ENCODE measurements at regions of chr11 and their contacts with region 1.

Region 1: DNA sequence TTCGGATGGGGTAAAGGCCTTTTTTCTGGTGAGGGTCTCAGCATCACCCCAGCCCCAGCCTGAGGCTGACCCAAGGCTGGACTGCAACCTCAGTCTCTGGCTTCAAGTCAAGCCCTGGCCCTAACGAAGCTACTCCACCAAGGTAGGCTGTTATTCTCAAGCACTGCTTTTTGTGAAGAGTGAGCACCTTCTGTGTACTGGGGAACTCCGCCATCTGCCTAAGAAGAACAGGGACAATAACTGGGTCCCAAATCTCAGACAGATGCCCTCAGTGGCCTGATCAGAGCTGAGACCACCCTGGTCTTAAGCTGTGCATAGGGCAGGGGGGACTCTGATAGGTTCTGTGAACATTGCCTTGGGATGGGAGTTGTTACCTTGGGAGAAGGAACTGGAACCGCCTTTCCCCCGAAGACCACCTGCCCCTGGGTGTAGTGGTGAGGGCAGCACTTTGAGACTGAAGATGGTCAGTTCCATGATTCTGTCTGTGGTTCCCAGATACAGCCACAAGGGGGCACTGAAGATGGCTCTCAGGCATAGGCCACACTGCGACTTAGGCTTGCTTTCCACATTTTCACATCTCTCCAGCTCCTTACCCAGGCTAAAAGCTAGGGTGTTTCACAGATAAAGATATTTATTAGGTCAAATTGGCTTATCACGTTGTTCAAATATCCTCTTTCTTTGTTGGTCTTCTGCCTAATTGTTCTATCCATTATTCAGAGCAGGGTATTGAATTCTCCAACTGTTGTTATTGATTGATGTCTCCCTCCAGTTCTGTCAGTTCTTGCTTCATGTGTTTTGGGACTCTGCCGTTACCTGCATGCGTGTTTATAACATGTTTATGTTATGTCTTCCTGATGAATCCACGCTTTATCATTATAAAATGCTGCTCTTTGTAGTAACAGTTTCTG is 11.8 kb upstream of the UVRAG start:
- DNase-seq: peak; percentile 81
- CTCF ChIP-seq: peak; percentile 88

Region 2: DNA sequence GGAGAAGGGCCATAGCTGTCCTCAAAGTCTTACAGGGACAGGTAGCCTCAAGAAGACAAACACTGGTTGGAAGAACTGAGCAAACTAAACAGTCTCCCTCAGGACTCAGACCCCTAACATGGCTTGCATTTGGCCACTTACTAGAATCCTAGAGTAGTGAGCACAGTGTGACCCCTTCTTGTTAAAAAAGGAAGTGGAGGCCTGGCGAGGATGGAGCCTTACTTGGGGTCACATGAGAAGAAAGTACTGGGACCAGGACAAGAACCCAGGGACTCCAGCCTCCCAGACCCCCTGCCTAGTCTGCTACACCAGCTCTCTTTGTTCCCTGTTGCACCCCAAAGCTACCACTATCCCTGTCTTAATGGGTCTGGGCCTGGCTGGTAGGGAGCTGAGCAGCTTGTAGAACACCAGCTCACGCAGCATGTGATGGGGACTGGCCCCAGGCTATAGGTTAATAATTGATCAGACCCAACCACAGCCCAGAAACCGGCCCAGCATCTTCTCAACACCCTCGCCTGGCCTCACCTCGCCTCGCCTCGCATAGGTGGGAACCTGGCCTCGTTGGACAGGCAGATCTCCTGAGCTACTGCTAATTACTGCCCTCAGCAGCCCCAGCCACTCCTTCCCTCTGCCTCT is 16.9 kb before region 1 on chr11:
- CTCF ChIA-PET with region 1: interaction called, 85 read pairs
- POLR2A ChIA-PET with region 1: no interaction called
- DNase-seq: peak; percentile 65
- CTCF ChIP-seq: no peak

Region 3: DNA sequence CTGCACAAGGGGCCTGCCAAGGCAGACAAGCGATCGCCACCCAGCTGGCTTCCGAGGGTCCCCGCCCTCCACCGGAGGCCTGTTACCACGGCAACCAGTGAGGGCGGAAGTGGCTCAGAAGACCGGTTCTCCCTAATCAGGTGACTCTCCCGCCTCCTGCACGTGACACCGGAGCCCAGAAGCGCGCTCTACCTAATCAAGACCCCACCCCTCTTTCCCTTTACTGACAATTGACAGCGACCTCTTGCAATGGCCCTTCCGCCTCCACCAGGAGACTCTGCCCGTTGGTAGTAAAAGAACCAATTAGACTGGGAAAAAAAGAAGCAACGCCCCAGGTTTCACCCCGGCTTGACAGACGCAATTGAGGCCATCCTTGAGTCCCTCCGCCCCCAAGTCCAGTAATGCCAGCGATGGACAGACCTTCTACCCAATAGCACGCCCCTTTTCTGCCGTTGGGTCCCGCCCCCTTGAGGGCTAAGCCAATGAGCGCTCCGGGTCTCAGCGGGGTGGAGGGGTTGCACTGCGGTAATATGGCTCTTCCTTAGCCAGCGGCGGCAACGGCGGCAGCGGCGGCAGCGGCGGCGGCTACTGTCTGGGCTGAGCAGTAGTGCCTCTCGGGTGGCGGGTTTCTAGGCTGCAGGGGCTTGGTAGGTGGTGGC is 11.6 kb after region 1 on chr11 and contains the start of gene UVRAG:
- CTCF ChIA-PET with region 1: interaction called, 77 read pairs
- POLR2A ChIA-PET with region 1: no interaction called
- DNase-seq: peak; percentile 96
- CTCF ChIP-seq: no peak

Region 4: GRCh38 chr11:75820636-75821035 is 17.5 kb after region 1 on chr11:
- CTCF ChIA-PET with region 1: interaction called, 77 read pairs
- POLR2A ChIA-PET with region 1: no interaction called
- DNase-seq: no peak
- CTCF ChIP-seq: no peak

Region 5: DNA sequence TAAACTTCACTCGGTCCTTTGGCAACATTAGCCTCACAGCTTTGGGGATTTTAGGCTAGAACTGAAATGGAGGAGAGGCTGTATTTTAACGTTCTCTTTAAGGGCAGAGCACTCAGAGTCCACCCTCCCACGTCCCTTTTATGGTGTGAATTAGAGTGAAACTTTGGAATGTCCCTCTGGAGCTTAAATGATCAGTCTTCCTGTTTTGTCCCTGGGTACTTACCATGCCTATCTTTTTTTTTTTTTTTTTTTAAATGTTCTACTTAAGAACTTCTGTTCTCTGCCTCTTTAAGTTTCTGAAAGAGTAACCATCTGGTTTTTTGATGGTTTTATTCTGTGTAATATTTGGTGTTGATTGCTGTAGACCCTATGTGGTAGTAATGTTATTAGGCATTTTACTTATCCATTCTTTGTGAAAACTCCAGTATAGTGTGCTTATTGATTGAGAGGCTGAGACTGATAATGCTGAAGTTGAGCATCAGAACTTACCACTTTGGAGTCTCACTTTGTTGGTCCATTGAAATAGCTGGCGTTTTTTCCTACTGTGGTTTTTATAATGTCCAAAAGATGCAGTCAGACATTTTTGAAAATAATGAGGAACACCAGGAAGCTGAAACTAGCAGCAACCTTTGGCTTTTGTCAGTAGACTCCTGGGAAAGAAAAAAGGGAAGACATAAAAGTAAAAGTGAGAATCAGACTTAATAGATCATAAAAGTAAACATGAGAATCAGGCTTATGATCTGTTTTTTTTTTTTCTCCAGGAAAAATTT is 23.5 kb after region 1 on chr11:
- CTCF ChIA-PET with region 1: interaction called, 15 read pairs
- POLR2A ChIA-PET with region 1: no interaction called
- DNase-seq: no peak
- CTCF ChIP-seq: no peak

Region 6: GRCh38 chr11:75831915-75832502 is 28.8 kb after region 1 on chr11:
- CTCF ChIA-PET with region 1: interaction called, 15 read pairs
- POLR2A ChIA-PET with region 1: no interaction called
- DNase-seq: no peak
- CTCF ChIP-seq: no peak

Region 7: DNA sequence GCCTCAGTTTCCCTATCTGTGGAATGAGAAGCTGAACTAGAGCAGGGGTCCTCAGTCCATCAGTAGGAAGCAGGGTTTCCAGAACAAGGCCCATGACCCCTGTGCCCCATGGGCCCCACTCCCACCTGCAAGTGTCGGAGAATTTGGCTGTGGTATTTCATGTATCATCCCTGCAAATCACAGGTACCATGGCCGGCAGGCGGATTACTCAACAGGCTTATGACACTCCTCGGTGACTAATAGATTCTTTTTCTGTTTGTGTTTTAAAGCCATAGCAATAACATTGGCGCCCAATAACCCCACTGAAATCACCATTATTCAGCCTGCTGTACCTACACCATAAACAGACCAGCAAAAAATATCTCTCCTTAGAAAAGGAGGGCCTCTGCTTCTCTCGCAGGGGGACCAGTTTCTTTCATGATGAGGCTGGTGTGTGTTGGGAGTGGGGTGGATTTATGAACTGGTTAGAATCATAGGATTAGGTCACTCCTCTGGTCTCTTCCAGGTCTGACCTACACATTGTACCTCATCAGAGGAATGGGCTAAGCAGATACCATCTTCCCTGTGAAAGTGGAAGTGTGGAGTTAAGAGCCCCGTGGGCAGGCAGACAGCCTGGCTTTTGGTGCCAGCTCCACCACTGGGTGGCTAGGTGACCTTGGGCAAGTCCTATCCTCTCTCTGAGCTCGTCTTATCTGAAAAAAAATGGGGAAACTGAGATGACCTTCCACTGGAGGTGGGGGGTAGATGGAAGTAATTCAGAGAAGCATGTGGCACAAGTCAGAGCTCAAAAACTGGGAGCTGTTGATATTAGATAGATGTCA is 463.3 kb after region 1 on chr11:
- CTCF ChIA-PET with region 1: no interaction called
- POLR2A ChIA-PET with region 1: no interaction called
- DNase-seq: no peak
- CTCF ChIP-seq: no peak

Measured in GM10248 (cell line).